Head of caudate nucleus (tissue), 42 donors: ENCODE measurements at regions of chr17 and their contacts with region 1.

Region 1: DNA sequence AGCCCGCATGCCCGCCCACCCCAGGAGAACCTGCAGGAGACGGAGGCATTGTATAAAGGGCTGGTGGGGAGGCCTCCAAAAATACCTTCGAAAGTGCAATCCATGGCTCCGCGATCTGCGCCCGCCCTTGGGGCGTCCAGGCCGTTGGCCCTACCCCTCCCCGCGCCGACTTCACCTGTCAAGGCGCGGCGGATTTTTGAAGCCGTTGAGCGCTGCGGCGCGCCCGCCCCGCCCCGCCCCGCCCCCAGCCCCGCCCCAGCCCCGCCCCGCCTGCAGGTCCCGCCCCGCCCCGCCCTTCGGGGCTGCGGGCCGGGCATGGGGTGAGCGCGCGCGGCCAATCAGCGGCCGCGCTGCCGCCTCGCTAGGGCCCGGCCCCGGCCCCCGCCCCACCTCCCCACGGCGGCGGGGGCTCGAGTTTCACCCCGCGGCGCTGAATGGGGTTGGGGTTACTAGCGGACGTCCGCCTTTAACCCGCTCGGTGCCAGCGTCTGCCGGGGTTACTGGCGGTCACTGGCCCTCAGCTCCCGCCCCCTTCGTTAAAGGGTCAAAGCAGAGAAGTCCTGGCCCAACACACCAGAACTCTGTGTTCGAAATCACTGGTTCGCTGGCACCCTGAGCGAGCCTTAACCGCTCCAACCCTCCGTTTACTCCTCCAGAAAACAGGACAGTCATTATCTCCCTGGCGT is 13.2 kb downstream of the SREBF1 start:
- DNase-seq: peak; percentile 76 to 96 (median 91)

Region 2: GRCh38 chr17:17119533-17119932 is 704.0 kb before region 1 on chr17:
- intact Hi-C with region 1: no loop called
- DNase-seq: no peak

Region 3: DNA sequence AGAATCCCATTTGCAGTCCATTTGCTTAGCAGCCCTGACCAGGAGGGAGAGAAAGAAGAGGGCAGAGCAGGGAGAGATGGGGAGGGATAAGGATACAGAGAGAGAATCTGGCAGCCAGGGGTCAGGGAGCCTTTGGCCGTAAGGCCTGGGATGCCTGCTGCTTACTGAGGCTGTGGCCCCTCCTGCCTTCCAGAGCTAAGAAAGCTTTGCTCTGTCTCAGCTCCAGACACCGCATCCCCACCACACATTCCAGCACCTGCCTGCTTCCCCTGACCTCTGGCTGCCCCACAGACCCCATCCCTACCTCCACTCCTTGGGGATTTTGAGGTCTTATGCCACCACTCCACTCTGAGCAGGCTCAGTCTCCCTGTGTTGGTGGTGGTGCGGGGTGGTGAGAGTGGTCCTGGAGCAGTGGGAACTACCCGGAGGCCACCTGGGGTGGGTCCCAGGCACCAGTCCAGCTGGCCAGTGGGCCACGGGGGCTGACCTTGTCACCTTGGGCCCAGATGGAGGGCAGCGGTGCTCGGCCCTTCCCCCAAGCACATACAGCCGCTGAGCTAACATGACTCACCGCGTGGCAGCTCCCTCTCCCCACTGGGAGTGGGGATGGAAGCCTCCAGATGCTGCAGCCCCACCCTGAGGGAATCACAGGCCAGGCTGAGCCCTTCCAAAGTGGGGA is 84.0 kb before region 1 on chr17:
- intact Hi-C with region 1: no loop called
- DNase-seq: peak; percentile 57 to 93 (median 79)

Region 4: GRCh38 chr17:17839791-17840707 is 16.5 kb after region 1 on chr17:
- intact Hi-C with region 1: loop called (anchors 2 kb)
- DNase-seq: peak; percentile 69 to 96 (median 92)